T-cell (primary cell): ENCODE measurements at regions of chr11 and their contacts with region 1.

Region 1: DNA sequence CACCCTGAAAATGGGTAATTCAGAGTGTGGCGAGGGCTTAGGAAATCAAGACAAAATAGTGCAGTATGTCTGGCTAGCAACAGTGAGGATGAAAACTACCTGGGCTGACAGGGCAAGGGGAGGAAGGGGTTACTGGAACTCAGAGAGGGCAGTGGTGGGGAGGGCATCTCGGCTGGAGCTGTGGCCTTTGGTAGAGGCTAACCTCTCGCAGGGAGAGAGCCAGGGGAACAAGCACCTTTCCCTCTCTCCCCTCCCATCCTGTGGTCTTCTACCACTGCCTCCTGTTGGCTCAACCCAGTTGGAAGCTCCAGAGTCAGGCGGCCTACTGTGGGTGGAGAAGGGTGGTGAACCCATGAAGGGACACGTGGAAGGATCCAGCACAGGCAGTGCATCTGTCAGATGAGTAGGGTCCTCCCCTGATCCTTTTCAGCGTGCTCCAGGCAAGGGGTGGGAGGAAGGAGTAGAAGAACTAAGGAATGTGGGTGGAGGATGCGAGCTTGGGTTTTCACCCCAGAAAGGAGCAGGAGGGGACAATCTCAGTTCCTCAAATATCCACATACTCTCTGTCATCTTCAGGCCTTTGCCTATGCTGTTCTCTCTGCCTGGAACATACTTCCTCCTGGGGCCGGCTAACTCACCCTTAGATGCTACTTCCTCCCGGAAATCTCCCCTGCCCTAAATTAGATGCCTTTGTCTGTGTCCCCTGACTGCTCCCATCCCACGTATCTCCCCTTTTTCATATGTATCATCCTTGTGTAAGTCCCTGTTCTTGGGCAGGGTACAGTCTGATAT is 6.2 kb upstream of the KCNE3 start:
- DNase-seq: no peak
- ATAC-seq: no peak
- H3K4me3 ChIP-seq: no peak overlapping the region
- H3K4me3 Mint-ChIP-seq: no peak overlapping the region
- H3K27ac ChIP-seq: no peak overlapping the region
- H3K27ac Mint-ChIP-seq: no peak overlapping the region
- H3K4me1 ChIP-seq: no peaks in the 10 kb centered on the region
- H3K4me1 Mint-ChIP-seq: no peaks in the 10 kb centered on the region
- H3K27me3 ChIP-seq: peaks cover 0 to 13% of the 10 kb centered on the region in 2 experiments
- H3K27me3 Mint-ChIP-seq: peaks cover 8 to 15% of the 10 kb centered on the region in 2 donors

Region 2: GRCh38 chr11:73680687-73681086 is 792.9 kb before region 1 on chr11:
- CTCF ChIA-PET with region 1: interaction called in 1 of 2 experiments, 10 read pairs
- POLR2A ChIA-PET with region 1: no interaction called
- DNase-seq: no peak
- ATAC-seq: no peak
- H3K4me3 ChIP-seq: no peak overlapping the region
- H3K4me3 Mint-ChIP-seq: no peak overlapping the region
- H3K27ac ChIP-seq: no peak overlapping the region
- H3K27ac Mint-ChIP-seq: no peak overlapping the region
- H3K4me1 ChIP-seq: no peaks in the 10 kb centered on the region
- H3K4me1 Mint-ChIP-seq: no peaks in the 10 kb centered on the region
- H3K27me3 ChIP-seq: no peaks in the 10 kb centered on the region
- H3K27me3 Mint-ChIP-seq: no peaks in the 10 kb centered on the region

Region 3: GRCh38 chr11:75174781-75175370 is 701.3 kb after region 1 on chr11:
- CTCF ChIA-PET with region 1: no interaction called
- POLR2A ChIA-PET with region 1: no interaction called
- DNase-seq: peak in 2 of 35 experiments; percentile 12 to 21
- ATAC-seq: peak in 3 of 4 experiments; percentile 71 to 87 (median 85)
- H3K4me3 ChIP-seq: no peak overlapping the region
- H3K4me3 Mint-ChIP-seq: peak overlapping the region in 1 of 3 donors; percentile 11
- H3K27ac ChIP-seq: no peak overlapping the region
- H3K27ac Mint-ChIP-seq: peak overlapping the region; percentile 78 to 85
- H3K4me1 ChIP-seq: peaks cover 0 to 16% of the 10 kb centered on the region in 2 experiments
- H3K4me1 Mint-ChIP-seq: peaks cover 13 to 16% (median 15%) of the 10 kb centered on the region in 3 donors
- H3K27me3 ChIP-seq: peaks cover 0 to 8% of the 10 kb centered on the region in 2 experiments
- H3K27me3 Mint-ChIP-seq: no peaks in the 10 kb centered on the region